CD4-positive, alpha-beta memory T cell (primary cell): ENCODE measurements at regions of chr2 and their contacts with region 1.

Region 1: GRCh38 chr2:10408649-10409579 is 39.2 kb downstream of the ODC1 start:
- DNase-seq: peak; percentile 79 to 81 (median 80)
- H3K4me3 ChIP-seq: peak overlapping the region in 1 of 2 donors; percentile 22
- H3K4me3 Mint-ChIP-seq: peak overlapping the region; percentile 79 to 94 (median 86)
- H3K27ac ChIP-seq: peak overlapping the region; percentile 48
- H3K27ac Mint-ChIP-seq: peak overlapping the region; percentile 83 to 97 (median 95)
- H3K4me1 ChIP-seq: peaks cover 41% of the 10 kb centered on the region
- H3K4me1 Mint-ChIP-seq: peaks cover 30 to 44% (median 33%) of the 10 kb centered on the region in 4 donors
- H3K27me3 ChIP-seq: no peaks in the 10 kb centered on the region
- H3K27me3 Mint-ChIP-seq: no peaks in the 10 kb centered on the region

Region 2: GRCh38 chr2:10141736-10142642 is 266.9 kb before region 1 on chr2:
- CTCF ChIA-PET with region 1: interaction called, 76 read pairs
- POLR2A ChIA-PET with region 1: interaction called, 3 read pairs
- intact Hi-C with region 1: loop called (anchors 5 kb)
- DNase-seq: peak; percentile 40 to 56 (median 47)
- H3K4me3 ChIP-seq: no peak overlapping the region
- H3K4me3 Mint-ChIP-seq: peak overlapping the region in 6 of 8 donors; percentile 32 to 75 (median 64)
- H3K27ac ChIP-seq: no peak overlapping the region
- H3K27ac Mint-ChIP-seq: peak overlapping the region; percentile 4 to 81 (median 70)
- H3K4me1 ChIP-seq: peaks cover 20% of the 10 kb centered on the region
- H3K4me1 Mint-ChIP-seq: peaks cover 16 to 27% (median 19%) of the 10 kb centered on the region in 4 donors
- H3K27me3 ChIP-seq: no peaks in the 10 kb centered on the region
- H3K27me3 Mint-ChIP-seq: no peaks in the 10 kb centered on the region

Region 3: DNA sequence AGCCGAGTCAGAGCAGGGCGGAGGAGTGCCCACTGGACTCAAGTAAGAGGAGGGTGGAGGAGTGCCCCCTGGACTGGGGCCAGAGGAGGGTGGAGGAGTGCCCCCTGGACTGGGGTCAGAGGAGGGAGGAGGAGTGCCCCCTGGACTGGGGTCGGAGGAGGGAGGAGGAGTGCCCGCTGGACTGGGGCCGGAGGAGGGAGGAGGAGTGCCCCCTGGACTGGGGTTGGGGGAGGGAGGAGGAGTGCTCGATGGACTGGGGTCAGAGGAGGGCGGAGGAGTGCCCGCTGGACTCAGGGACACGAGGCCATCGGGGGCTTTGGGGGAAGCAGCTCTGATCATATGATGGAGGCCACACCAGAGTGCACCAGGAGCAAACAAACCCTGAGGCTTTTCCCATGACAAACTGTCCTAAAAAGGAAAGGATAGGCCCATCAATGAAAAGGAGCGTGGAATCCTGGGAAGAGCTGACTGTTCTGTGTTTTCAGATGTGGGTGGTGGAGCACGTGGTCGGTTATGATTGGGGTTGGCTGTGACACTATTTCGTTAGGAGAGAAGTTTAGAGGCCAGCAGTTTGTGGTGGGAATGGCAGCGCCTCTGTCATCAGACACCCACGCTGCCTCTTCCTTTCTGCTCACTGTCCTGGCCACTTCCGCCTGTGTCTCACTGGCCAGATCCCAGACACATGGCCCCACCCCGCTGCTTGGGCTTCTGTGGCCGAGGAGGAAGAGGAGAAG is 130.7 kb before region 1 on chr2:
- CTCF ChIA-PET with region 1: interaction called, 27 read pairs
- POLR2A ChIA-PET with region 1: interaction called, 3 read pairs
- intact Hi-C with region 1: no loop called
- DNase-seq: no peak
- H3K4me3 ChIP-seq: no peak overlapping the region
- H3K4me3 Mint-ChIP-seq: peak overlapping the region in 2 of 8 donors; percentile 35 to 58
- H3K27ac ChIP-seq: no peak overlapping the region
- H3K27ac Mint-ChIP-seq: peak overlapping the region in 5 of 7 donors; percentile 3 to 63 (median 14)
- H3K4me1 ChIP-seq: peaks cover 10% of the 10 kb centered on the region
- H3K4me1 Mint-ChIP-seq: peaks cover 4 to 17% (median 9%) of the 10 kb centered on the region in 4 donors
- H3K27me3 ChIP-seq: no peaks in the 10 kb centered on the region
- H3K27me3 Mint-ChIP-seq: no peaks in the 10 kb centered on the region

Region 4: DNA sequence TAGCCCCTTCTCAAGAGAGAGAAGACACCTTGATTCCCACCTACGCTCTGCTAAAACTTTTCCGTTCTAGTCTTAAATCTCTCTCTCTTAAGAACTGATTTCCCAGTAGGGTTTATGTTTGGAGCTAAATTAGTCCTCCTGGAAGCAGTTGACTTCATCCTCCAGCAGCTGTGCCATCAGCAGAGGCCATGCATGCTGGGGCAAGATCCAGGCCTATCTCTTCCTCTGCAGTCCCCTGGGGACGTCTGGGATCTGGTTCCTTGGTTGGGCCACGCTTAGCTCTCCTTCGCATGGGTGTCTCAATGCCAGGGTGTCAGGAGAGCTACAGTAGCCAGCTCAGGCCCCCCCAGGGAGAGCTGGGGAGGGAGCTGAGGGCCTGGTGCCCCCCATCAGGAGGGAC is 56.6 kb before region 1 on chr2:
- CTCF ChIA-PET with region 1: interaction called, 12 read pairs
- POLR2A ChIA-PET with region 1: no interaction called
- intact Hi-C with region 1: no loop called
- DNase-seq: no peak
- H3K4me3 ChIP-seq: no peak overlapping the region
- H3K4me3 Mint-ChIP-seq: no peak overlapping the region
- H3K27ac ChIP-seq: no peak overlapping the region
- H3K27ac Mint-ChIP-seq: peak overlapping the region in 2 of 7 donors; percentile 63 to 86
- H3K4me1 ChIP-seq: peaks cover 17% of the 10 kb centered on the region
- H3K4me1 Mint-ChIP-seq: peaks cover 42 to 79% (median 64%) of the 10 kb centered on the region in 4 donors
- H3K27me3 ChIP-seq: no peaks in the 10 kb centered on the region
- H3K27me3 Mint-ChIP-seq: no peaks in the 10 kb centered on the region

Region 5: GRCh38 chr2:10382354-10383061 is 26.4 kb before region 1 on chr2:
- CTCF ChIA-PET with region 1: interaction called, 45 read pairs
- POLR2A ChIA-PET with region 1: interaction called, 17 read pairs
- intact Hi-C with region 1: loop called (anchors 2 kb)
- DNase-seq: peak; percentile 63 to 79 (median 72)
- H3K4me3 ChIP-seq: peak overlapping the region; percentile 40 to 68
- H3K4me3 Mint-ChIP-seq: peak overlapping the region; percentile 63 to 85 (median 80)
- H3K27ac ChIP-seq: peak overlapping the region; percentile 36
- H3K27ac Mint-ChIP-seq: peak overlapping the region; percentile 69 to 96 (median 92)
- H3K4me1 ChIP-seq: peaks cover 97% of the 10 kb centered on the region
- H3K4me1 Mint-ChIP-seq: peaks cover 68 to 96% (median 86%) of the 10 kb centered on the region in 4 donors
- H3K27me3 ChIP-seq: no peaks in the 10 kb centered on the region
- H3K27me3 Mint-ChIP-seq: no peaks in the 10 kb centered on the region

Region 6: GRCh38 chr2:10424051-10424450 is 15.1 kb after region 1 on chr2:
- CTCF ChIA-PET with region 1: interaction called, 40 read pairs
- POLR2A ChIA-PET with region 1: interaction called, 3 read pairs
- intact Hi-C with region 1: no loop called
- DNase-seq: no peak
- H3K4me3 ChIP-seq: no peak overlapping the region
- H3K4me3 Mint-ChIP-seq: no peak overlapping the region
- H3K27ac ChIP-seq: no peak overlapping the region
- H3K27ac Mint-ChIP-seq: no peak overlapping the region
- H3K4me1 ChIP-seq: no peaks in the 10 kb centered on the region
- H3K4me1 Mint-ChIP-seq: no peaks in the 10 kb centered on the region
- H3K27me3 ChIP-seq: no peaks in the 10 kb centered on the region
- H3K27me3 Mint-ChIP-seq: no peaks in the 10 kb centered on the region

Region 7: DNA sequence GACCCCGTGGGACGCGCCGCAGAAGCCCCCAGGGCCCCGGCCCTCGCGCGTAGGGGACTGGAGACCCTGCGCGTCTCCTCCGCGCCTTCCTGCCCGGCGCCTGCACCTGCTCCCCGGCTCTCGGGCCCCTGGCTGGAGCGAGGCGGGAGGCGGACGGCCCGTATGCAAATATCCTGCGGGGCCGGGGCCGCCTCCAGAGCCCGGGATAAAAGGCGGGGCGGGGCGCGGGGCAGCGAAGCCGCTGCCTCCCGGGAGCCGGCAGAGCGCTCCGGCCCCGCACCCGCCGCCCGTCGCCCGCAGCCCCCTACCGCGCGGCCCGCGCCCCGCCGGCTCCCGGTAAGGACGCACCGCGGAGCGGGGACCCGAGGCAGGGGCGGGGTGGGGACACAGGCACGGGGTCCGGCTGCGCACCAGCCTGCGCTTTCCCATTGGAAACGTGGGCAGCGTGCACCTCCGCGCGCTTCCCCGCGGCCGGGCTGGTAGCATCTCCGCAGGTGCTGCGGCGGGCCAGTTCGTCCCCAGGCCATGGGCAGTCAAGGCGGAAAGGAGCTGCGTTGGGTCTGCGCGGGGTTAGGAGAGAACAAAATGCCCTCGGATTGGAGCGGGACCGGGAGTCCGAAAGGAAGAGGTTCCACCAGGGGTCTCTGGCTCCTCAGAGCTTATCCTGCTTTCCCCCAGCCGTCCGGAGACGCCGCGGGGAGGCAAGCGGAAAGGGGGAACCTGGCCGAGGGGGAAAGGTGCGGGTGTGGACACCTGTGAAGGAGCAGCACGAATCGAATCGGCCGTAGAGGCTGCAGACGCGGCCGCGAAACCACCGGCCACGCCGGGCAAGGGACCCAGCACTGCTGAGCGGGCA is 312.7 kb after region 1 on chr2 and contains the start of gene ATP6V1C2:
- CTCF ChIA-PET with region 1: no interaction called
- POLR2A ChIA-PET with region 1: no interaction called
- intact Hi-C with region 1: no loop called
- DNase-seq: peak in 1 of 5 donors; percentile 13
- H3K4me3 ChIP-seq: peak within 1 kb of the TSS in 1 of 2 donors; percentile 19
- H3K4me3 Mint-ChIP-seq: peak within 1 kb of the TSS; percentile 33 to 80 (median 69)
- H3K27ac ChIP-seq: no peak within 1 kb of the TSS
- H3K27ac Mint-ChIP-seq: no peak within 1 kb of the TSS
- H3K4me1 ChIP-seq: peaks cover 15% of the 10 kb centered on the region
- H3K4me1 Mint-ChIP-seq: peaks cover 7 to 20% (median 15%) of the 10 kb centered on the region in 4 donors
- H3K27me3 ChIP-seq: peaks cover 29% of the 10 kb centered on the region
- H3K27me3 Mint-ChIP-seq: peaks cover 36 to 40% of the 10 kb centered on the region in 2 donors
- total RNA-seq, gene ATP6V1C2: not detected